ENCODE measurements at regions of chrX and their contacts with region 1.

Region 1: GRCh38 chrX:18425199-18426003 is at the start of gene CDKL5:
- DNase-seq: peak; percentile 97
- H3K4me3 Mint-ChIP-seq: peak within 1 kb of the TSS; percentile 77
- H3K27ac Mint-ChIP-seq: no peak within 1 kb of the TSS
- H3K4me1 Mint-ChIP-seq: peaks cover 7% of the 10 kb centered on the region
- H3K27me3 Mint-ChIP-seq: no peaks in the 10 kb centered on the region
- total RNA-seq, gene CDKL5: 0.91 to 1.4 TPM

Region 2: GRCh38 chrX:18354369-18355223 is 70.8 kb before region 1 on chrX and contains the start of gene SCML2:
- CTCF ChIA-PET with region 1: no interaction called
- intact Hi-C with region 1: loop called (anchors 2 kb)
- DNase-seq: peak; percentile 40
- H3K4me3 Mint-ChIP-seq: peak within 1 kb of the TSS; percentile 72
- H3K27ac Mint-ChIP-seq: no peak within 1 kb of the TSS
- H3K4me1 Mint-ChIP-seq: peaks cover 6% of the 10 kb centered on the region
- H3K27me3 Mint-ChIP-seq: peaks cover 15% of the 10 kb centered on the region
- total RNA-seq, gene SCML2: 4.6 to 5.1 TPM

Region 3: DNA sequence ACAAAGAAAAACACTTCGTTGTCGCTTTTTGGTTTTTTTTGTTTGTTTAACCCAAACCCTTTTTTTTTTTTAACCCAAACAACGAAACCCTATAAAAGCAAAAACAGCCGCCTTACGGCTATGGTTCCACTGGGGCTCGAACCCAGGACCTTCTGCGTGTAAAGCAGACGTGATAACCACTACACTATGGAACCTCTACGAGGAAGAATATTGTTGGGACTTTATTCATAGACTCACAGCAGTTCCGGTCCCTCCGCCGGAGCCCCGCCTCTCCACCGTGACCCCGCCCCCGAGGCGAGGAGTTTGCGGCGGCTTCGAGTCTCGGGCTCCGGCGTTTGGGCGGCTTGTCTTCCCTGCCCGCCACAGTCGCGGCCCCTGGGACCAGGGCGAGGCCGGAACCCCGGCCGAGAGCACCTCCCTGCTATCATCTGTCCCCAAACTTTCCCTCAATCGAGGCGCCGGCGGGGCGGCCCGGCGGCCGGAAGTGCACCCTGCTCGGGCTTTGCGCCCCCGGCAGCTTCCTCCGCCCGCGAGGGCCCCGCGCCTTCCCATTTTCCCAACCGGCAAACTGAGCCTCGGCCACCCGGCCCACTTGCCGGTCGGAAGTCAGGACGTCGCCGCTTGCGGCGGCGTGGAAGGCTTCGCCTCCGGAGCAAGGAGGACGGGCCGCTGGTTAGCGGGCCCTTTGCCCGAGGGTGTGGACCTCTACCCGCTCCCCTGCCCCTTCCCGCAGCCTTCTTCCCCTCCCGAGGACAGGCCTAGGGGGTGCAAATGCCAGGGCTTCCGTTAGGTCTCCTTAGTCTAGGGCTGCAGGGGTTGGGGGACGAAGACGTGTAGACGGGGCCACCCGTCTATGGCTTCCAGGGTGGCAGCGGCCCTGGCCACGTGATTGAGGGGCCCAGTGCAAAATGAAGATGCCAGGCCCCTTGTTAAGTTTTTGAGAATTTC is 249.7 kb after region 1 on chrX:
- CTCF ChIA-PET with region 1: no interaction called
- intact Hi-C with region 1: loop called (anchors 2 kb)
- DNase-seq: peak; percentile 72
- H3K4me3 Mint-ChIP-seq: peak overlapping the region; percentile 67
- H3K27ac Mint-ChIP-seq: peak overlapping the region; percentile 75
- H3K4me1 Mint-ChIP-seq: peaks cover 8% of the 10 kb centered on the region
- H3K27me3 Mint-ChIP-seq: no peaks in the 10 kb centered on the region

Region 4: DNA sequence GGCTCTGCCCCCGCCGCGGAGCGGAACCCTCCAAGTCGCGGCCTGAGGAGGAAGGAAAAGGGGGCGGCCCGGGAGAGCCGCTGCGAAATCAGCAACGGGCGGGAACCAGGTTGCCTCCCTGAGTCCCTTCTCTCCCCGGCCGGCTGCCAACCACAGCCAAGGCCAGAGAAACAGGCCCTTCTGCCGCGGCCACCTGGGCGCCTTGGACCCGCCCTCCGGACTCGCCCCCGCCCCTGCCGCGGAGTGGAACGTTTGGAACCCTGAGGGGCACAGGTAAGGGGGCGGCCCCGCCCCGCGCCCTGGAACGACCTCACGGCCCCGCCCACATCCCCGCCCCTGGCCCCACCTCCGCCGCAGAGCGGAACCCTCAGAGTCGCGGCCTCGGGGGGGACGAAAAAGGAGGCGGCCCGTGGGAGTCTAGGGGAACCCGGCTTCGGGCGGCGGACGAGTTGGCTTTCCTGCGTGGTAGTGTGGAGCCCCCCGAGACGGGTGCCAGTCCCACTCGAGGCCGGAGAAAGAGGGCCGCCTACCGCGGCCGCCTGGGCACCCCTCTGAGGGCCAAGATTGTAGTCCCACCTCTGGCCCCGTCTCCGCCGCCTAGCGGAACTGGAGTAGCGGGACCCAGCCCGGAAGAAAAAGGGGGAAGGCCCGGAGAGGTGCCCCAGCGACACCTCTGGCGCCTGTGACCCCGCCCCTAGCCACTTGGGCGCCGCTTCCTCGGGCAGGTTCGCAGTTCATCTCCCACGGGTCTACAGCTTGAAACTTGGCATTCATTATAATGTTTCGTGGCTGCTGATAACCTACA is 559.2 kb after region 1 on chrX:
- CTCF ChIA-PET with region 1: no interaction called
- intact Hi-C with region 1: loop called (anchors 1 kb)
- DNase-seq: peak; percentile 85
- H3K4me3 Mint-ChIP-seq: peak overlapping the region; percentile 88
- H3K27ac Mint-ChIP-seq: peak overlapping the region; percentile 88
- H3K4me1 Mint-ChIP-seq: peaks cover 11% of the 10 kb centered on the region
- H3K27me3 Mint-ChIP-seq: no peaks in the 10 kb centered on the region

Region 5: DNA sequence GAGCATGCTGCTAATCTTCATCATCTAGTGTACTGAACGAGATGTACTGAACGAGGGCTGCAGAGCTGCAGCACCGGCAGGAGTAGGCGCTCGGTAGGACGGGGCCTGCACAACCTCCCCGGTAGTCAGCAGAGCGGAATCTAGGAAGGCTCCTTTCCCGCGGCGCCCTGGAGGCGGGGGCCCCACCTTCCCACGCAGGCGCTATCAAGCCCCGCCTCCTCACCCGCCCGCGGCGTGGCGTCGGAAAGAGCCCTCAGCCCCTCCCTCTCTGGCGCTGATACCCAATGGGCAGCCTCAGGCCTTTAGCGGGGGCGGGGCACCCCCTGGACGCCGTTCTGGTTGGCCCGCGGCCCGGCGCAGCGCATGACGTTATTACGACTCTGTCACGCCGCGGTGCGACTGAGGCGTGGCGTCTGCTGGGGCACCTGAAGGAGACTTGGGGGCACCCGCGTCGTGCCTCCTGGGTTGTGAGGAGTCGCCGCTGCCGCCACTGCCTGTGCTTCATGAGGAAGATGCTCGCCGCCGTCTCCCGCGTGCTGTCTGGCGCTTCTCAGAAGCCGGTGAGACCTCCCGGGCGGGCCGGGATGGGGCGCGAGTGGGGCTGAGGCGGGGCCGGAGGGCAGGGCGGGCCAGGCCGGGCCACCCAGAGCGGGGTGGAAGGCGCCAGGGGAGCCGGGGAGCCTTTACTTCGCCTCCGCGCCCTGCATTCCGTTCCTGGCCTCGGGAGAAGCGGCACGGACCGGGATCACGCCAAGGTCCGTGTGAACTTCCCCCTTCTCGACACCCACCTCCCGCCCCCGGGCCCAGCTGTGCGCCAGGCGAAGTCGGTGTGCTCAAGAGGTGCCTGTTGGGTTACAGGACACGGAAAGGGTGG is 918.4 kb after region 1 on chrX and contains the start of gene PDHA1:
- CTCF ChIA-PET with region 1: no interaction called
- intact Hi-C with region 1: loop called (anchors 1 kb)
- DNase-seq: peak; percentile 94
- H3K4me3 Mint-ChIP-seq: peak within 1 kb of the TSS; percentile 83
- H3K27ac Mint-ChIP-seq: peak within 1 kb of the TSS; percentile 78
- H3K4me1 Mint-ChIP-seq: peaks cover 21% of the 10 kb centered on the region
- H3K27me3 Mint-ChIP-seq: no peaks in the 10 kb centered on the region
- total RNA-seq, gene PDHA1: 233 to 242 TPM

Measured in activated naive CD4-positive, alpha-beta T cell treated with anti-CD3 and anti-CD28 coated beads for 36 hours (primary cell).